Right ventricle myocardium inferior (tissue), 1 donor: ENCODE measurements at regions of chr4 and their contacts with region 1.

Region 1: GRCh38 chr4:41360214-41360920 is 103.6 kb downstream of the UCHL1 start:
- DNase-seq: peak; percentile 87
- ATAC-seq: peak; percentile 88

Region 2: DNA sequence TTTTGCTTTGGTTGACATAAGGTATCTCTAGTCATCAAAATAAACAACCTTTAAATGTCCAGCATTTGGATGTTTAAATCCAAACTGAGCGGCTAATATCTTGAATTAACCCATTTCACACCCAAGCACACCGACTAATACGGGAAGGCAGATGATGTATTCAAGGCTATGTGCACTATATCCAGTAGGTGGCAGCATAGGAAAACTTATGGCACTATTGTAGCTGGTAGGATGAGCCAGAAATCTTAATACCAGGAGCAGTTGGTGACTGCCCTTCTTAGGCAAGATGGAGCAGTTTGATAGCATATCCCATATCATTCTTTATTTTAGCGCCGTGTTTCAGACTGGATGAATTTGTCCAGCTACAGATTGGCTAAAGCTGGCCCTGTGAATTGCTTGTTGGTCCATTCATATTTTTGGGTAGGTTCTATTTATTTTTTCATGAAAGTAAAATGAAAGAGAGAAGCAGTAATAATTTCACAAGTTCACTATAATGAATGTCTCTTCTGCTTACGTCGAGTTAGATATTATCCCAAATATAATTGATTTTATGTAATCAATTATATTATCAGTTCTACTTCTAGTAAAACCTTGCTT is 79.2 kb before region 1 on chr4:
- intact Hi-C with region 1: loop called (anchors 5 kb)
- DNase-seq: no peak
- ATAC-seq: peak; percentile 93

Region 3: DNA sequence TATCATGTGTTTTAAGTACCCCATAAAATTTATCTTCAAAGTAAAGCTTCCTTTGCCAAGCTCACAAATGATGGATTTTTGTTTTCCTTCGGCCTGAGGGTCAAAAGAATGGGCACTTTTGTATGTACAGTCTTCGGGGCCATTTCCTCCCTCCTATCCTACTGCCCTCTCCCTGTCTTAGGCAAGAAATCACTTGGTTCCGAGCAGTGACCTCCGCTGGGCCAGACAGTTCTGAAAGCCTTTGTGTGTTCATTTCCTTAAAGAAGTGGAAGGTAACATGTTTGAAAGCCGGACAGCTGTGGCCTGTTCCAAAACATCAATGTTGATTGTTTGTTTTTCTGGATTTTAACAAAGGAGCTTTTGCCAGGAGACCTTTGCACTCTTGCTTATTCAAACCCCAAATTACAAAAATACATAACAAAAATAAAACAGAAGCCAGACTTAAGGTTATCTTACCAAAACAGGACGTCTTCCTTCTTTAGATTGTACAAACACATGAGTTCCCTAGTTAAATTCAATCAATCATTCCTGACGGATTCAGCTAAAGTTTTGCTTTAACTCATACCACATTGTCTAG is 67.0 kb after region 1 on chr4:
- intact Hi-C with region 1: loop called (anchors 5 kb)
- DNase-seq: peak; percentile 22
- ATAC-seq: no peak

Region 4: DNA sequence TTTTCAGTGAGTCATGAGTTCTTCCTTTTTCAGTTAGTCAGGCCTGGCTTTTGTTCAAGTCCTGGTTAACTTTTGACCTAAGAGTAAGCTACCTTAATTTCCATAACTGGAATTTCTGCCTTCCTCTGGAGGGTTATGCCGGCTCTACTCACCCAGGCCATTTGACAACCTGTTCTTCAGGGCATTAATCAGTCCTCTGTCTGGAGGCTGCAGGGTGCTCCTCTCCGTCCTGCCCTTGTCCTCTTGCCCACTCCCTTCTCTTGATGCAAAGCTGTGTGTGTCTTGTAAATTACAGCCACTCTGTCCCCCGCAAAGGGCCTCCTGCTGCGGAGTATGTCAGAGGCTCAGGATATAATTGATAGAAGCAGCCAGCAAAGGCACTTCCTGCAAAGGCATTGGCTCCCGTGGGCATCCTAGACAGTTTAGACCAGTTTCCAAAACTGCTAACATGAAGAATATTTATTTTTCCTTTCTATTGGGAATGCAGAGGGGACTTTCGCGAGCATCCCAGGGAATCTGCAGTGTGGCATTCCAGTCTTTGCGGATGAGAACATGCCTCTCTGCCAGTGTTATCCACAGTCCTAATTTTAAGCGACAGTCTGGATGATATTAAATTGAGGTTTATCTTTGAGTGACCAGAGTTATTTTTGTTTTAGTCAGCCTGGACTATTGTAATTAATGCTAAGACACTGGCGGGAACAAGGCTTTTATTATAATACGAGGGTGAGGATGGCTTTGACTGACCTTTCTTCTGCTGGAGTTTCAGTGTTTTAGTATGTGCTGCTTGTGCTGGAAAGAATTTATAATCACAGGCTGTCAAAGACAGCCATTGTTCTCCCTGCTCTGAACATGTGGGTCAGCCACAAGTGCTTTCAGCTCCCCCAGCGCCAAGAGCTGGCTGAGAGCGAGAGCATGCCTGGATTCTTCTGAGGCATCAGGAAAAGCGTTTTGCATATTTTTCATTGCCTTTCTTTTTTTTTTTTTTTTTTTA is 251.8 kb after region 1 on chr4:
- intact Hi-C with region 1: loop called (anchors 2 kb)
- DNase-seq: peak; percentile 72
- ATAC-seq: peak; percentile 90

Region 5: GRCh38 chr4:41661442-41662076 is 301.2 kb after region 1 on chr4:
- intact Hi-C with region 1: loop called (anchors 5 kb)
- DNase-seq: no peak
- ATAC-seq: peak; percentile 56